ENCODE measurements at regions of chr3 and their contacts with region 1.

Region 1: GRCh38 chr3:172256101-172256734 is 192.0 kb downstream of the GHSR start:
- DNase-seq: peak in 2 of 3 donors; percentile 48 to 74
- ATAC-seq: peak; percentile 83 to 84
- H3K4me3 ChIP-seq: no peak overlapping the region
- H3K27ac ChIP-seq: peak overlapping the region; percentile 53
- H3K4me1 ChIP-seq: peaks cover 18% of the 10 kb centered on the region
- H3K27me3 ChIP-seq: no peaks in the 10 kb centered on the region

Region 2: DNA sequence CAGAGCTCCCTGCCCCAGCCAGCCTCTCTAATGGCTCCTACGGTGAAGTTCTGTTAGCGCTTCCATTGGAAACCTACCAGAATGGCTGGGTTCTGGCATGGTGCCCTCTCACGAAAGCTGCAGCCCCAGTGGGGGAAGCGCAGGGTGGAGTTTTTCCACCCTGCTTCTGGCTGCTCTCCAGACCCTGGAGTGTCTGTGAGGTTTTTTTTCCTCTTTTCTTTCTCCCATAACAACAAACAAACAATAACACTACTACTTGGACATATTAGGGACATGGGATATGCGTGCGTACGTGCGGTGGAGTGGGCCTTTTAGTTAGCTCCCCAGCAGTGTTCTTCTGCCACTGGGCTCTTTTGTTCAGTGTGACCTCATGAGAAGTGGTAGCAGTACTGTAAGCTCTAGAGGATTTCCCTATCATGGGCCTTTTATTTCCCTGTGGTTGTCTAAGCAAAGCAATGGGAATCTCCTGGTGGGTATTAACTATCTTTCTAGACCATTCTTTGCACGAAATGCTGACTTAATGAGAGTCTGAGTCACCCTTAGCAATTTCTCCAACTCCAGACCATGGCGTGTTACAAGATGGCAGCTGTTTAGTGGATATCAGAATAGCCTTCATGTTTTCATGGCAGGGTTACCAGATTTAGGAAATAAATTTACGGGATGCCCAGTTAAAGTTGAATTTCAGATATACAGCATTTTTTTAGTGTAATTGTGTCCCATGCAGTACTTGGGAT is 54.9 kb before region 1 on chr3:
- intact Hi-C with region 1: loop called in 1 of 4 experiments (anchors 10 kb)
- DNase-seq: peak; percentile 90 to 94 (median 93)
- ATAC-seq: peak; percentile 92 to 93
- H3K4me3 ChIP-seq: peak overlapping the region; percentile 11
- H3K27ac ChIP-seq: peak overlapping the region; percentile 90
- H3K4me1 ChIP-seq: peaks cover 4% of the 10 kb centered on the region
- H3K27me3 ChIP-seq: no peaks in the 10 kb centered on the region

Region 3: GRCh38 chr3:172315401-172316091 is 59.3 kb after region 1 on chr3:
- intact Hi-C with region 1: no loop called
- DNase-seq: no peak
- ATAC-seq: peak in 1 of 2 donors; percentile 14
- H3K4me3 ChIP-seq: no peak overlapping the region
- H3K27ac ChIP-seq: peak overlapping the region; percentile 50
- H3K4me1 ChIP-seq: peaks cover 20% of the 10 kb centered on the region
- H3K27me3 ChIP-seq: no peaks in the 10 kb centered on the region